ENCODE measurements at regions of chr4 and their contacts with region 1.

Region 1: GRCh38 chr4:120163895-120164294 is 97.2 kb upstream of the MAD2L1 start:
- DNase-seq: no peak
- ATAC-seq: peak in 3 of 8 donors; percentile 44 to 67 (median 53)
- H3K4me3 ChIP-seq: no peak overlapping the region
- H3K27ac ChIP-seq: no peak overlapping the region
- H3K4me1 ChIP-seq: peaks cover 0 to 16% (median 7%) of the 10 kb centered on the region in 9 donors
- H3K27me3 ChIP-seq: no peaks in the 10 kb centered on the region
- CTCF ChIP-seq: no peak

Region 2: GRCh38 chr4:119755599-119755998 is 408.3 kb before region 1 on chr4:
- intact Hi-C with region 1: no loop called
- DNase-seq: no peak
- ATAC-seq: no peak
- H3K4me3 ChIP-seq: no peak overlapping the region
- H3K27ac ChIP-seq: no peak overlapping the region
- H3K4me1 ChIP-seq: peaks cover 0 to 6% (median 0%) of the 10 kb centered on the region in 9 donors
- H3K27me3 ChIP-seq: no peaks in the 10 kb centered on the region
- CTCF ChIP-seq: no peak

Region 3: DNA sequence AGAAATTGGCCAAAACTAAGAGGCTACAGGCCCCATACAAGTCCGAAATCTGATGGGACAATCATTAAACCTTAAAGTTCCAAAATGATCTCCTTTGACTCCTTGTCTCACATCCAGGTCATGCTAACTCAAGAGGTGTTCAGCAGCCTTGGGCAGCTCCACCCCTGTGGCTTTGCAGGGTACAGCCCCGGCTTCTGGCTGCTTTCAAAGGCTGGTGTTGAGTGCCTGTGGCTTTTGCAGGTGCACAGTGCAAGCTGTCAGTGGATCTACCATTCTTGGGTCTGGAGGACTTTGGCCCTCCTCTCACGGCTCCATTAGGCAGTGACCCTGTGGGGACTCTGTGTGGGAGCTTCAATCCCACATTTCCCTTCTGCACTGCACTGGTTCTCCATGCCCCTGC is 231.9 kb after region 1 on chr4:
- intact Hi-C with region 1: no loop called
- DNase-seq: no peak
- ATAC-seq: no peak
- H3K4me3 ChIP-seq: no peak overlapping the region
- H3K27ac ChIP-seq: no peak overlapping the region
- H3K4me1 ChIP-seq: no peaks in the 10 kb centered on the region
- H3K27me3 ChIP-seq: no peaks in the 10 kb centered on the region
- CTCF ChIP-seq: no peak

Region 4: DNA sequence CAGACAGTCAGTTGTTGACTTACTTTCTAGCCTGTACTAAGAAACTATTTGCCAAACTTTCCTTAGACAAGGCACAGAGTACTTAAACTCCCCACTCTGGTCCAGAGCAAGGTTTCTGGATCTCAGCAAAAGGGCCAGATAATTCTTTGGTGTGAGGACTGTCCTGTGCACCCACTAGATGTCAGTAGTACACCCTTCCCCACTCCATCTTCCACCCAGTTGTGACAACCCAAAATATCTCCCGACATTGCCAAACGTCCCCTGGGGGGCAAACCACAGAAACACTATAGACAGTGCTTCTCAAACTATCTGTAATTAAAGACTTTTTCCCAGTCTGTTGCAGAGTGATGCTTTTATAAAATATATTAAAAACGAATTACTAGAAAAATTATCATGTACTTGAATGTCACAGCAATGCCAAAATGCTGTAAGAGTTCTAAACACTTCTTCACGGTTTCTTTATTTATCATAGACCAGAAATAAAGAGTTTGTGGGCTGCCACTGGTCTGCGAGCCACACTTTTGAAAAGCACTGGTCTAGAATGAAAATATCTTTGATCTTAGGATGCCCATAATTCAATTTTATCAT is 555.2 kb after region 1 on chr4:
- intact Hi-C with region 1: loop called in 1 of 10 experiments (anchors 10 kb)
- DNase-seq: peak in 1 of 2 donors; percentile 33
- ATAC-seq: peak; percentile 79 to 96 (median 89)
- H3K4me3 ChIP-seq: peak overlapping the region in 1 of 10 donors; percentile 14
- H3K27ac ChIP-seq: no peak overlapping the region
- H3K4me1 ChIP-seq: peaks cover 0 to 18% (median 5%) of the 10 kb centered on the region in 9 donors
- H3K27me3 ChIP-seq: no peaks in the 10 kb centered on the region
- CTCF ChIP-seq: peak; percentile 40 to 76 (median 72)